ENCODE measurements at regions of chr11 and their contacts with region 1.

Region 1: GRCh38 chr11:61446211-61446651 is 16.3 kb downstream of the SDHAF2 start:
- DNase-seq: peak; percentile 93
- H3K4me3 Mint-ChIP-seq: no peak overlapping the region
- H3K27ac Mint-ChIP-seq: peak overlapping the region; percentile 37
- H3K4me1 Mint-ChIP-seq: peaks cover 21% of the 10 kb centered on the region
- H3K27me3 Mint-ChIP-seq: no peaks in the 10 kb centered on the region

Region 2: DNA sequence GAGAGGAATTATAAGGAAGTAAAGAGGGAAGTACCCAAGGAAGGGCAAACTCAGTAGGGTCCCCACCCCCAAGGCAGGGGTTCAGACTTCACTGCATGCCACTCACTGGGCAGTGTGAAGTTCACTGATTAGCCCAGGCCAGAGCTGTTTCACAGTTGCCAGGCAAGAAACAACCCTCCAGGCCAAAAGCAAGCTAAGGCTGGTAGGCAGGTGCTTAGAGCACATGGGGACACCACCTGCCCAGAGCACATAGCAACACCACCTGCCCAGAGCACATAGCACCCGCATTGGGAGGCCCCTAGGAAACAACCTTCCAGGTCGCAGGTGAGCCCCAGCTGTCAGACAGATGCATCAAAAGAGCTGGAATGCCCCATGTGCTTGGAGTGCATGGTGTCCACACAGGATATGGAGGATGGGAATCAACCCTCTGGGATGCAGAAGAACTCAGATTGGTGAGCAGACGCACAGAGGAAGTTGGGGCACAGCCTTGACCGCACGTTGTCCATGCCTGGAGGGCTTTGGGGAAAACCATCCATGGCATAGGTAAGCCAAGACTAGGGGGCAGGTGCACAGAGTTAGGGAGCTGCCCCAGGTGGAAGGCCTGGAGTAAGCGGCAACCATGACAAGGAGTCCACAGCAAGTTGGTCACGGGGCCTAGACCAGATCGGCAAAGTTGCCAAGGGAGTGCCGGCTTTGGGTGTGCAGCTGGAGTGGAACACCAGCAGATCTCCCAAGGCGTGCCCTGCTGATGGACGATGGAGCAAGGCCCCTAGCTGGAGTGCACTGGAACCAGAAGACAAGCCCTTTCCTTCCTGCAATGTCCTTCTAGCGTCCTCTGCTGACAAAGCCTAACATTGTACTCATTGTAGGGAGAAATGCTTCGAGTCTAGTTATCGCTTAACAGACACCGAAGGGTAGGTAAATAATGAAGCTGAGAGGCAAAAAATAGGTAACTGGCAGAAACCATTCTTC is 61.7 kb before region 1 on chr11:
- intact Hi-C with region 1: no loop called
- DNase-seq: no peak
- H3K4me3 Mint-ChIP-seq: no peak overlapping the region
- H3K27ac Mint-ChIP-seq: no peak overlapping the region
- H3K4me1 Mint-ChIP-seq: peaks cover 6% of the 10 kb centered on the region
- H3K27me3 Mint-ChIP-seq: no peaks in the 10 kb centered on the region

Region 3: GRCh38 chr11:61516675-61517572 is 70.7 kb after region 1 on chr11:
- intact Hi-C with region 1: loop called (anchors 1 kb)
- DNase-seq: peak; percentile 88
- H3K4me3 Mint-ChIP-seq: peak overlapping the region; percentile 51
- H3K27ac Mint-ChIP-seq: no peak overlapping the region
- H3K4me1 Mint-ChIP-seq: peaks cover 5% of the 10 kb centered on the region
- H3K27me3 Mint-ChIP-seq: peaks cover 13% of the 10 kb centered on the region

Region 4: DNA sequence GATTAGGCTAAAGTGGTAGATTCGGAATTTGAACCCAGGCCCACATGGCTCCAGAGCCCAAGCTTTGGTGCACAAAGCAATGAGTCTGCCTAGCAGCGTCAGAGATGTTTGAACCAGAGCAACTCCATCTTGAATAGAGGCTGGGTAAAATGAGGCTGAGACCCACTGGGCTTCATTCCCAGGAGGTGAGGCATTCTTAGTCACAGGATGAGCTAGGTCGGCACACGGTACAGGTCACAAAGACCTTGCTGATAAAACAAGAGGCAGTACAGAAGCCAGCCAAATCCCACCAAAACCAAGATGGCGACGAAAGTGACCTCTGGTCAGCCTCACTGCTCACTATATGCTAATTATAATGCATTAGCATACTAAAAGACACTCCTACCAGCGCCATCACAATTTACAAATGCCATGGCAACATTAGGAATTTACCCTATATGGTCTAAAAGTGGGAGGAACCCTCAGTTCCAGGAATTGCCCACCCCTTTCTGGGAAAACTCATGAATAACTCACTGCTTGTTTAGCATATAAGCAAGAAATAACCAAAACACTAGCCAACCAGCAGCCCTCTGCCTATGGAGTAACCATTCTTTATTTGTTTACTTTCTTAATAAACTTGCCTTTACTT is 193.7 kb after region 1 on chr11:
- intact Hi-C with region 1: loop called (anchors 1 kb)
- DNase-seq: no peak
- H3K4me3 Mint-ChIP-seq: no peak overlapping the region
- H3K27ac Mint-ChIP-seq: no peak overlapping the region
- H3K4me1 Mint-ChIP-seq: no peaks in the 10 kb centered on the region
- H3K27me3 Mint-ChIP-seq: peaks cover 3% of the 10 kb centered on the region

Measured in activated CD4-positive, alpha-beta T cell treated with anti-CD3 and anti-CD28 coated beads, Interleukin-2, amount 10 ng/mL, durations not matched to agents 24 days and 14 days (primary cell).